Activated naive CD4-positive, alpha-beta T cell treated with anti-CD3 and anti-CD28 coated beads for 36 hours (primary cell): ENCODE measurements at regions of chr5 and their contacts with region 1.

Region 1: DNA sequence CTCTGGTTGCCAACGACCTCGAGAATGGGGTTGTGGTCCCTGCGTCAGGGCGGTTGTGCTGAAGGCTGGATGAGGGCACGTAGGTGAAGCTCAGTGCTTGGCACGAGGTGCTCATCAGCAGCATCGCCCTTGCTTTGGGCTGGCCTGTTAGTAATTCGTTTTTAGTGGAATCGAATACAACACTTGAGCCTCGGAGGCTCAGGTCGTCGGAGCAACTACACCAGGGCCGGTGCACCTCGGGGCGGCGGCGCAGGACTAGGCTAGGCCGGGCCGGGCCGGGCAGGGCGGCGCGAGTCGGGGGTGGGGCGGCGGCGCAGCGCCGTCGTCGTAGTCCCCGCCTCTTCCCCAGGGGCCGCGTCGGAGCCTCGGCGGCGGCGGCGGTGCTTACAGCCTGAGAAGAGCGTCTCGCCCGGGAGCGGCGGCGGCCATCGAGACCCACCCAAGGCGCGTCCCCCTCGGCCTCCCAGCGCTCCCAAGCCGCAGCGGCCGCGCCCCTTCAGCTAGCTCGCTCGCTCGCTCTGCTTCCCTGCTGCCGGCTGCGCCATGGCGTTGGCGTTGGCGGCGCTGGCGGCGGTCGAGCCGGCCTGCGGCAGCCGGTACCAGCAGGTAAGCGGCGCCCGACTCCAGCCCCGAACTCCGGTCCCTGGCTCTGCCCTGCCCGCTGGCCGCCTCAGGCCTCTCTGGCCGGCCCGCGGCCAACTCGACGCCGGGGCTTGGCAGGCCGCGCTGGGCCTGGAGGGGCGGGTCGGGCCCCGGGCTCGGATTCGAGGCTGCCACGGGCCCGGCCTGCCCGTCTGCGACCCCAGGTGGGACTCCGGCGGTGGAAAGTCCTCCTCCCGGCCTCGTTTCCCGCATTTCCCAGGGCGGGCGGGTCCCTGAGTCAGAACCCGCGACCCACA is at the start of gene NDFIP1:
- DNase-seq: peak; percentile 88
- H3K4me3 Mint-ChIP-seq: peak within 1 kb of the TSS; percentile 87
- H3K27ac Mint-ChIP-seq: peak within 1 kb of the TSS; percentile 97
- H3K4me1 Mint-ChIP-seq: peaks cover 68% of the 10 kb centered on the region
- H3K27me3 Mint-ChIP-seq: no peaks in the 10 kb centered on the region
- total RNA-seq, gene NDFIP1: 103 to 104 TPM

Region 2: GRCh38 chr5:142006363-142007236 is 102.1 kb before region 1 on chr5:
- CTCF ChIA-PET with region 1: interaction called, 121 read pairs
- intact Hi-C with region 1: loop called (anchors 1 kb)
- DNase-seq: peak; percentile 86
- H3K4me3 Mint-ChIP-seq: peak overlapping the region; percentile 69
- H3K27ac Mint-ChIP-seq: peak overlapping the region; percentile 100
- H3K4me1 Mint-ChIP-seq: peaks cover 87% of the 10 kb centered on the region
- H3K27me3 Mint-ChIP-seq: no peaks in the 10 kb centered on the region

Region 3: DNA sequence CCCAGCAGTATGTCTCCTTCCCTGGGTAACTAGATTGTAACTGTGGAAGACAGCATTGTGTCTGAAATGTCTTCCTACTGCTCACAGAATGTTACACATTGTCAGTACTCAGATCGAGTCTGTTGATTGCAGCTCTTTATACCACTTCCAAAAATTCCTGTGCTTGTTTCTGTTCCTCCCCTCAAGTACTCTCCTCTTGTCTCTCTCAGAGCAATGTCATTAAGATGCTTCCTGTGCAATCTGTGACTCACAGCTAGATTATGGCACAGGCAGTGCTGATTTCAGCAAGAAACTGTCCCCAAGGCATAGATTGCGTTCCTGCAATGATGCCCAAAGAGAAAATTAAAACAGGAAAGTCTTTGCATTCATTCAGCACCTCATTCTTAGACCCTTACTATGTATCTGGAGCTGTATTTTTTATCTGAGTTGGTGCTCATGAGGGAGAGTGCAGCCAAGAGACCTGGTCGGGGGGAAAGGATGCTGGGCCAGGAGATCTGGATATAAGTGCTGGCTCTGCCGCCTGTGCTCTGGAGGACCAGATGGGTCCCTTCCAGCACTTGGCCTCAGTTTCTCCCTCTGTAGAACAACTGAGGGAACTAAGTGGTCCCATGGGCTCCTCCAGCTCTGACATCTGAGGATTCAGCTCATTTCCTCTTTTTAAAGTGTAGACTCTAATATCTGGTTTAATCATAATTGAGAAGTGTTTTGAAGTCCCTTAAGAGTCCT is 55.1 kb before region 1 on chr5:
- CTCF ChIA-PET with region 1: no interaction called
- intact Hi-C with region 1: loop called (anchors 2 kb)
- DNase-seq: peak; percentile 50
- H3K4me3 Mint-ChIP-seq: peak overlapping the region; percentile 10
- H3K27ac Mint-ChIP-seq: no peak overlapping the region
- H3K4me1 Mint-ChIP-seq: peaks cover 32% of the 10 kb centered on the region
- H3K27me3 Mint-ChIP-seq: no peaks in the 10 kb centered on the region

Region 4: DNA sequence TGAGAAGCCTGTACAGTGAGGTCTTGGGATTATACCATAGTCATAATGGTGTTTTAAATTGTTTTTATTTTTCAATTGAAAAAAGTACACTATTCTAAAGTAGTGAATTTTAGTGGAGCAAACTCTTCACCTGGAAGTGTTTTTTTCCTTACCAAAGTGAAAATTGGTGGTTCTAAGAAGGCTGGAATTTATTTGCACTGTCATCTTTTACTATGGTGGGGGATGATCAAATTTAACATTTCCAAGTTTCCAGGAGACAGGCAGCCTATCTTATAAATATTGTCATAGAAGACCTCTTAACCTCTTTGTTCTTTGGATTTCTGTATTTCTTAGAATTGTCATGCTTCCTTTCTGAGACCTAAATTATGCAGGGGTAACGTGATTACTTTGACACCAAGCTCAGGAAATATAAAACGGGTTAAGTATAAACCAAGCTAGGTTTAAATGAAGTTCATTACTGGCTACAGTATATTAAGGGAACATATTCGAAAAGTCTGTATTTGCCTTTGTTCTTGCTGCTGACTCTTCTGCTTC is 20.1 kb after region 1 on chr5:
- CTCF ChIA-PET with region 1: interaction called, 8 read pairs
- intact Hi-C with region 1: loop called (anchors 2 kb)
- DNase-seq: no peak
- H3K4me3 Mint-ChIP-seq: no peak overlapping the region
- H3K27ac Mint-ChIP-seq: peak overlapping the region; percentile 57
- H3K4me1 Mint-ChIP-seq: peaks cover 69% of the 10 kb centered on the region
- H3K27me3 Mint-ChIP-seq: no peaks in the 10 kb centered on the region

Region 5: GRCh38 chr5:142627383-142628255 is 518.9 kb after region 1 on chr5:
- CTCF ChIA-PET with region 1: no interaction called
- intact Hi-C with region 1: no loop called
- DNase-seq: no peak
- H3K4me3 Mint-ChIP-seq: no peak overlapping the region
- H3K27ac Mint-ChIP-seq: no peak overlapping the region
- H3K4me1 Mint-ChIP-seq: no peaks in the 10 kb centered on the region
- H3K27me3 Mint-ChIP-seq: no peaks in the 10 kb centered on the region

Region 6: DNA sequence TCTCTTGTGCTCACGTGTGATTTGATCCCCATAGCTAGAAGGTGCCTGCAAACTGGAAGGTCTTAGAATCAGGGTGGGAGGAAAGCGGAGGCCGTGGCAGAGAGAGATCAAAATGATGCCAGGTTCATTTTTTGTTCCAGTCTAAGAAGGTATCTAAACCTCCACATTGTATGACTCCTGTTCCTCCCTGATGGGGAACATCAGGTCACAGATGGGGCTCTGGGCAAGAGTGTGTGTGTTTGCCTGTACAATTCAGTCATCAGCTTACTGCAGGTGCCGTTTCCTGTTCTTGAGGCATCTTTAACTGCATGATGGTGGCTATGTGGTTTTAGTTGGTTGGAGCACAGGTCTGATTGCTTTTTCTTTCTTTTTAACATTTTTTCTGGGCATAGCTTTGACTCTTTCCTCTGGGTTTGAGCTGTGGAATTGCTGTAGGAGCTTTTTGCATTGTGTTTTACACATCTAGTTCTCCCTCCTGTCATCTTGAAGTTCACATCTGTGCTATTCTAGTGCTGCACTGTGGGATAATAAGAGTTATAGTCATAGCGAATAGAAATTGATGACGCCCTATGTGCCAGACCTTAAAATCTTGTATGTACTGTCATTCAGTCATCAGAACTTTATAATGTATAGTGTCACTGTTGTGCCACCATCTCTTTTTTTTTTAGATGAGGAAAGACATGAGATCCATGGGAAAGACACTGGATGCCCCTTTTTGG is 692.3 kb after region 1 on chr5:
- CTCF ChIA-PET with region 1: no interaction called
- intact Hi-C with region 1: loop called (anchors 5 kb)
- DNase-seq: peak; percentile 77
- H3K4me3 Mint-ChIP-seq: peak overlapping the region; percentile 64
- H3K27ac Mint-ChIP-seq: peak overlapping the region; percentile 90
- H3K4me1 Mint-ChIP-seq: peaks cover 61% of the 10 kb centered on the region
- H3K27me3 Mint-ChIP-seq: no peaks in the 10 kb centered on the region